IMR-90 (cell line): ENCODE measurements at regions of chr1 and their contacts with region 1.

Region 1: GRCh38 chr1:202348509-202349205 is at the start of gene PPP1R12B:
- DNase-seq: peak; percentile 99
- ATAC-seq: peak; percentile 99
- H3K4me3 ChIP-seq: peak within 1 kb of the TSS; percentile 74
- H3K27ac ChIP-seq: peak within 1 kb of the TSS; percentile 66
- H3K4me1 ChIP-seq: peaks cover 3% of the 10 kb centered on the region
- H3K27me3 ChIP-seq: no peaks in the 10 kb centered on the region
- CTCF ChIP-seq: no peak
- POLR2A ChIP-seq: peak; percentile 91
- RAD21 ChIP-seq: no peak
- total RNA-seq, gene PPP1R12B: 12.0 and 22.8 TPM in 2 replicates

Region 2: DNA sequence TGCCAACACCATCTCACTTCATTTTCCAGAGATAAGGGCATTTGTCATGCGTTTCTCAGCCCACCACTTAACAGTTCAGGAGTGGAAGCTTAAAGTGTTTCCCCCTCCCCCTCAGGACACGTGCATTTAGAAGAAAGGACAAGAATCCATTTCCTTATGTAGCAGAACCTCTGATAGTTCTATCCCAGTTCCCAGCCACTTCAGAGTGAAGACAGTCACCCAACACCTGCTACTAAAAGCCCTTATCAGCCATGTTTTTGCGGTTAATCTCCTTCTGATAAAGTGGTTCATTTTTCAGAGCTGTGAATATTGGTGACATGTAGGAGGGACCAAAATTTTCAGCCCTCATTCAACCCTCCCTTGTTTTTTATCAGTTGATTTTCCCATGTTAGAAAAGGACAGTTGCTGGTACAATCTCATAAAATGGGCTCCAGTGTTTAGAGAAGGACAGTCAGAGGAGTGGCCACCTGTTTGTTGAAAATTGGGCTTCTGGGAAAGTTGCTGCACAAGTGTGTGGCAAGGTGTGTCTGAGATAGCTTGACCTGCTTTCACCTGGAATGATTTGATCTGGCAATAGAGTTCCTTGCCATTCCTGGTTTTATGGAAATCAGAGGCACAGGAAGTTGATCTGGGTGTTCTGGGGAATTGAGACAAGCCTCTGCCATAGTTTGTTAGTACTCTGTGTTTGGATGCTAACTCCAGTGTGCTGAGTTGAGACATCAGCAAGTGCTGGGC is 113.9 kb after region 1 on chr1:
- CTCF ChIA-PET with region 1: no interaction called
- POLR2A ChIA-PET with region 1: no interaction called
- dilution Hi-C with region 1: no loop called
- in situ Hi-C with region 1: no loop called
- intact Hi-C with region 1: loop called (anchors 5 kb)
- DNase-seq: no peak
- ATAC-seq: no peak
- H3K4me3 ChIP-seq: no peak overlapping the region
- H3K27ac ChIP-seq: no peak overlapping the region
- H3K4me1 ChIP-seq: peaks cover 5% of the 10 kb centered on the region
- H3K27me3 ChIP-seq: no peaks in the 10 kb centered on the region
- CTCF ChIP-seq: no peak
- POLR2A ChIP-seq: no peak
- RAD21 ChIP-seq: no peak

Region 3: DNA sequence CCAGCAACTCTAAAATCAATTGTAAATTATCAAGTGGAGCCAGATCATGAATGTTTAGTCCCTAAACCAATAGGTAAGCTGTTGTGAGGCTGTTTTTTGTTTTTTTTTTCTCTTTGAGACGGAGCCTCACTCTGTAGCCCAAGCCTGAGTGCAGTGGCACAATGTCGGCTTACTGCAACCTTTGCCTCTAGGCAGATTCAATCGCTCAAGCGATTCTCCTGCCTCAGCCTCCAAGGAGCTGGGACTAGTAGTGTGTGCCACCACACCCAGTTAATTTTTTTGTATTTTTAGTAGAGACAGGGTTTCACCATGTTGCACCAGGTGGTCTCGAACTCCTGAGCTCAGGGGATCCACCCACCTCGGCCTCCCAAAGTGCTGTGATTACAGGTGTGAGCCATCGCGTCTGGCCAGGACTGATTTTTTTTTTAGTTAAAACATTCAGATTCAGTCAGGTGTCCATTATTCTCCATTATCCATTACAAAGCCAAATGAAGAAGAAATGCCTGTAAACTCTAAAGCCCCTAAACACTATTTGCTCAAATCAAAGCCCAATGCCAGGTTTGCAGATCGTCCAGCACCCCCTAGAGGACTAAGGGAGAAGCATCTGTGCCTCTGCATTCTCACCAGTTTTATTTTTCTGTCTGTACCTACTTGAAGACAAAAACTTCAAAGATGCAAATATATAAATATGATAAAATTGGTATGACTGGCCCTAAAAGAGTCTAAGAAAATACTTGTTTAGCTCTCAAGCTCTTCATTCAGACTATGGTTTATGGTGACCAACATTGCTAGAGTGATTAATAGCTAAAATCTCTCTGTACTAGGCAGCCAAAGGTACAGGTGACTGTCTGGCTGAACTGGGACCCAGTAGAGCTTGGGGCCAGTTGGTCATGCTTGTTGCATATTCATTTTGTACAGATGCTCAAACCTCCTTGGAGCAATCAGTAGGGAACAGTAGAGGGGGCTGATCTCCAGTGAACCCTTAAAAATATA is 223.0 kb after region 1 on chr1:
- CTCF ChIA-PET with region 1: no interaction called
- POLR2A ChIA-PET with region 1: no interaction called
- dilution Hi-C with region 1: no loop called
- in situ Hi-C with region 1: no loop called
- intact Hi-C with region 1: loop called (anchors 1 kb)
- DNase-seq: peak; percentile 59
- ATAC-seq: peak; percentile 55
- H3K4me3 ChIP-seq: no peak overlapping the region
- H3K27ac ChIP-seq: no peak overlapping the region
- H3K4me1 ChIP-seq: peaks cover 29% of the 10 kb centered on the region
- H3K27me3 ChIP-seq: no peaks in the 10 kb centered on the region
- CTCF ChIP-seq: peak; percentile 86
- POLR2A ChIP-seq: no peak
- RAD21 ChIP-seq: peak; percentile 80

Region 4: DNA sequence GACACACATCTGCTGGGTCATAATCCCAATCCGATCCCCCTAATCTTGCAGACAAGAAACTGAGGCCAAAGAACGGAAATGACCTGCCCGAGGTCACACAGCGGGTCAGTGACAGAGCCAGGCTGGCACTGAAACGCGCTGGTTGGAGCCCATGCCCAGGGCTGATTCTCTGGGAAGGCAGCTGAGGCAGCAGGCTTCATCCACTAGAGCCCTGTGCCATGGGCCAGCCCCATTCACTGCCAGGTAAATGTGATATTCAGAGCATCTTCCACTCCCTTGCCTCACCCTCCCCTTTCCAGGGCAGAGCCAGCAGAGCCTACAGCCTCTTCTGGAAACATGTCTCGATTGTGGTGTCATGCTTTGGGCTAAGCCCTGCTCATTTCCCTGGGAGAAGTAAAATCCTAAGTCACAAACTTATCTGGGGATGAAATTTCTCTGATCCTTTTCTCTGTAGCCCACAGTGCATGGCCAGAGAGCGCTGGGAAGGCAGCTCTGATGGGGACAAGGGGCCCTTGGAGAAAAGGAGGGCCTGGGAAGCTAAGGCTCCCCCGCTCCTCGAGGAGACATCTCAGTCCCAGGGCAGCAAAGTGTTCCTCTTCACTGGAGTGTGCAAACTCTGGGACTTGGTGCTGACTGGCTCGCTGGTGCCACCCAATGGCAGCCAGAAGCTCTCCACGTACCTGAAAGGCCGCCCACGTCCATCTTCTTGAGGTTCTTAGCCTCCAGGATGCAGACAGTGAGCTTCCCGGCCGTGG is 251.2 kb after region 1 on chr1:
- CTCF ChIA-PET with region 1: no interaction called
- POLR2A ChIA-PET with region 1: no interaction called
- dilution Hi-C with region 1: no loop called
- in situ Hi-C with region 1: no loop called
- intact Hi-C with region 1: loop called (anchors 2 kb)
- DNase-seq: peak; percentile 84
- ATAC-seq: peak; percentile 100
- H3K4me3 ChIP-seq: no peak overlapping the region
- H3K27ac ChIP-seq: peak overlapping the region; percentile 56; the same call in 1 of the 2 replicates
- H3K4me1 ChIP-seq: peaks cover 6% of the 10 kb centered on the region; the same call in 1 of the 2 replicates
- H3K27me3 ChIP-seq: no peaks in the 10 kb centered on the region
- CTCF ChIP-seq: peak; percentile 95
- POLR2A ChIP-seq: no peak
- RAD21 ChIP-seq: peak; percentile 96

Region 5: DNA sequence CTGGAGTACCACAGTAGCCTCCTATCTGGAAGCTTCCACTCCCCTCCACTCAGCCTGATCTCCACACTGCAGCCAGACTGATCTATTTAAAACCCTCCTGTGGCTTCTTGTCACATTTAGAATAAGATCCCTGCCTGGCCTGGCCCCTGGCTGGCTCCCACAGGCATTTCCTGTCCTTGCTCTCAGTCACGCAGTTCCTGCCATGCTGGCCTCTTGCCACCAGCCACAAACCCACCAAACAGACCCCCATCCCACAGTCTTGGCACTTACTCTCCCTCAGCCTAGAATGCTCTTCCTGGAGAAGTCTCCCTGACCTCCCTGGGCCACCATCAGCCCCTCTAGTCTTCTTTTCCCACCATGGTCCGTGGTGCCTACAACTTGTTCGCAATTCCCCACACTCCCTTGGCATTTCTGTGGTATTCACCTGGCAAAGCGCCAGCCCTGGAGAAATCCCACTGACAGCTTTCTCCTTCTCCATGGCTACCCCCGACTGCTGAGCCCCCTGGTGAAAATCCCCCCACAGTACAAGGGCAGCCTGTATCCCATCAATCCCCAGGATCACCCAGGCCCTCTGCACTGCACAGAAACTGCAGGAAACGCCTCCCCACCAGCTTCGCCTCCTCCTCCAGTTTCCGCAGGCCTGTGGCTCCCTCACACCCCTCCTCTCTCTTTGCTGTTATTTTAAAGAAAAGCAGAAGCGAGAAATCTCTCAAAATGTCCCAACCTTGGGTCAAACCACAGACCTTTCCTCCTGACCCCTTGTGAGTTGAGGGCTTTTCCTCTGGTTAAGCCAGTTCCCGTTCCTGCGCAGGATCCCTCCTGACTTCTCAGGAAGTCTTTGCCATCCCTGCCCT is 267.1 kb after region 1 on chr1:
- CTCF ChIA-PET with region 1: no interaction called
- POLR2A ChIA-PET with region 1: no interaction called
- dilution Hi-C with region 1: no loop called
- in situ Hi-C with region 1: loop called (anchors 10 kb)
- intact Hi-C with region 1: no loop called
- DNase-seq: peak; percentile 45
- ATAC-seq: peak; percentile 68
- H3K4me3 ChIP-seq: no peak overlapping the region
- H3K27ac ChIP-seq: peak overlapping the region; percentile 58
- H3K4me1 ChIP-seq: peaks cover 28% of the 10 kb centered on the region
- H3K27me3 ChIP-seq: no peaks in the 10 kb centered on the region
- CTCF ChIP-seq: no peak
- POLR2A ChIP-seq: no peak
- RAD21 ChIP-seq: no peak

Region 6: DNA sequence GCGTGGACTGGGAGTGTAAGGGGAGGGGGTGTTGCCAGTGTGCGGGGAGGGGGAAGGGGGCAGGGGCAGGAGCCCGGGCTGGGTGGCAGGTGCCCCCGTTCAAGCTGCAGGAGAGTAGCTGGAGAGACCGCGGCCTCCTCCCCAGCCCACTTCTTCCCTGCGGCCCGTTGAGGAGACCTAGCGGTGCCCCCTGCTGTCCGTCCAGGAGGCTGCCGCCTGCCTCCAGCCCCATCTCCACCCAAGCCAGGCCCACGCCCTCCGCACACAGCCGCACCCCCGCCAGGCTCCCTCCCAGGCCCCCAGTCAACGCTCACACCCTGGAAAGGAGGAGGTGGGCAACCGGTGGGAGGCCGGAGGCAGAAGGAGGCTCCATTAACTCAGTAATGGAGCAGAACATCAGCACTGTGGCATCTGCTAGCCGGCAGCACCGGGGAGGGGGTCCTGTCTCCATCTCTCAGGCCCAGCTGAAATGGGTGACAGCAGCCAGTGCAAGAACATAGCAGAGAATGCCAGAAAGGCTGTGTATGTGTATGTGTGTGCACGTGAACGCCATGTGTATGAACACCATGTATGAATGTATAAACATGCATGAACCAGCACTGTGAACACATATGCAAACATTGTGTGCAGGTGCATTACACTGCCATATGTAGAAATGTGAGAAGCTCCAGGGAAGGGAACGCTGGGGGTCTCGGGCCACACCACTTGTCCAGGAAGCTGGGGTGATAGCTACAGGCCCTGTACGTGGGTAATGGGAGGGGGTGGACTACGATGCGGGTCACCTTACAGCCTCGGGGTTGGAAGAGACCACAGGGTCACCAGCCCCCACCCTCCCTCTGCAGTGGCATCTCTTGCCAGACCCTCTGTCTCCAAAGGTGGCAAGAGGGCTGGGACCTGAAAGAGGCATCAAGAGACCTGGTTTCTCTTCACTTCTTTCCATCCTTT is 277.0 kb after region 1 on chr1:
- CTCF ChIA-PET with region 1: no interaction called
- POLR2A ChIA-PET with region 1: no interaction called
- dilution Hi-C with region 1: no loop called
- in situ Hi-C with region 1: no loop called
- intact Hi-C with region 1: loop called (anchors 5 kb)
- DNase-seq: peak; percentile 57
- ATAC-seq: peak; percentile 89
- H3K4me3 ChIP-seq: no peak overlapping the region
- H3K27ac ChIP-seq: no peak overlapping the region
- H3K4me1 ChIP-seq: peaks cover 7% of the 10 kb centered on the region
- H3K27me3 ChIP-seq: peaks cover 7% of the 10 kb centered on the region
- CTCF ChIP-seq: peak; percentile 71
- POLR2A ChIP-seq: no peak
- RAD21 ChIP-seq: peak; percentile 71

Region 7: DNA sequence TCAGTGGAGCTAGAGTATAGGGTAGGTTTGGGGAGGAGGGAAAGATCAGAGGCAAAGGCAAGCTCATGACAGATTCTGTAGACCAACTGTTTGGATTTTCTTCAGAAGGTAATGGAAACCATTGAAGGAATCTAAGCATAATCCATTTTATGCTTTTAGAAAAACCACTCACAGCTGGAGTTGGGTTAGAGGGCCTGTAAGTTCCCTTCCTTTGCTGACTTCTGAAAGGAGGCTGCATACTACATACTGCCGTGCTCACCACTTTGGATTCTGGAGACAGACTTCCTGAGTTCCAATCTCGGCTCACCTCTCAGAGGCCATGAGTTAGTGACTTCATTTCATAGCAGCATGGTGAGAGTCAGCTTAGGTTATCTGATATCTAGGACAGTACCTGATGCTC is 368.0 kb after region 1 on chr1:
- CTCF ChIA-PET with region 1: no interaction called
- POLR2A ChIA-PET with region 1: no interaction called
- dilution Hi-C with region 1: no loop called
- in situ Hi-C with region 1: no loop called
- intact Hi-C with region 1: loop called (anchors 1 kb)
- DNase-seq: no peak
- ATAC-seq: no peak
- H3K4me3 ChIP-seq: no peak overlapping the region
- H3K27ac ChIP-seq: no peak overlapping the region
- H3K4me1 ChIP-seq: no peaks in the 10 kb centered on the region
- H3K27me3 ChIP-seq: peaks cover 35% of the 10 kb centered on the region
- CTCF ChIP-seq: no peak
- POLR2A ChIP-seq: no peak
- RAD21 ChIP-seq: no peak